Aorta (tissue), 5 donors: ENCODE measurements at regions of chr16 and their contacts with region 1.

Region 1: GRCh38 chr16:81095953-81096717 is at the start of gene GCSH:
- DNase-seq: peak; percentile 100
- ATAC-seq: peak; percentile 100
- H3K4me3 ChIP-seq: peak within 1 kb of the TSS; percentile 44 to 66
- H3K27ac ChIP-seq: peak within 1 kb of the TSS in 1 of 2 donors; percentile 78
- H3K4me1 ChIP-seq: no peaks in the 10 kb centered on the region
- H3K27me3 ChIP-seq: no peaks in the 10 kb centered on the region
- total RNA-seq, gene GCSH: 14.7 to 18.1 TPM

Region 2: GRCh38 chr16:80459331-80459777 is 636.8 kb before region 1 on chr16:
- intact Hi-C with region 1: no loop called
- DNase-seq: no peak
- ATAC-seq: peak; percentile 57
- H3K4me3 ChIP-seq: no peak overlapping the region
- H3K27ac ChIP-seq: no peak overlapping the region
- H3K4me1 ChIP-seq: no peaks in the 10 kb centered on the region
- H3K27me3 ChIP-seq: no peaks in the 10 kb centered on the region

Region 3: GRCh38 chr16:80875616-80876015 is 220.5 kb before region 1 on chr16:
- intact Hi-C with region 1: no loop called
- DNase-seq: no peak
- ATAC-seq: no peak
- H3K4me3 ChIP-seq: no peak overlapping the region
- H3K27ac ChIP-seq: no peak overlapping the region
- H3K4me1 ChIP-seq: no peaks in the 10 kb centered on the region
- H3K27me3 ChIP-seq: no peaks in the 10 kb centered on the region

Region 4: GRCh38 chr16:81006814-81007696 is 89.1 kb before region 1 on chr16 and contains the starts of genes CENPN and CMC2:
- intact Hi-C with region 1: loop called in 1 of 2 experiments (anchors 1 kb)
- DNase-seq: peak; percentile 99
- ATAC-seq: peak; percentile 99
- H3K4me3 ChIP-seq: peak within 1 kb of the TSS; percentile 50 to 78
- H3K27ac ChIP-seq: peak within 1 kb of the TSS; percentile 68 to 81
- H3K4me1 ChIP-seq: peaks cover 0 to 3% of the 10 kb centered on the region in 2 donors
- H3K27me3 ChIP-seq: no peaks in the 10 kb centered on the region
- total RNA-seq, gene CENPN: 4.4 to 5.3 TPM
- total RNA-seq, gene CMC2: 33.0 to 33.2 TPM

Region 5: GRCh38 chr16:81077076-81077940 is 18.8 kb before region 1 on chr16 and contains the start of gene C16orf46:
- intact Hi-C with region 1: loop called in 1 of 2 experiments (anchors 2 kb)
- DNase-seq: peak; percentile 98 to 100
- ATAC-seq: peak; percentile 100
- H3K4me3 ChIP-seq: peak within 1 kb of the TSS; percentile 57 to 78
- H3K27ac ChIP-seq: peak within 1 kb of the TSS; percentile 64 to 97
- H3K4me1 ChIP-seq: no peaks in the 10 kb centered on the region
- H3K27me3 ChIP-seq: no peaks in the 10 kb centered on the region
- total RNA-seq, gene C16orf46: 0.24 to 0.49 TPM

Region 6: GRCh38 chr16:81314603-81315270 is 218.6 kb after region 1 on chr16 and contains the start of gene GAN:
- intact Hi-C with region 1: loop called (anchors 10 kb)
- DNase-seq: peak; percentile 97 to 98
- ATAC-seq: peak; percentile 98
- H3K4me3 ChIP-seq: peak within 1 kb of the TSS; percentile 86 to 93
- H3K27ac ChIP-seq: peak within 1 kb of the TSS in 1 of 2 donors; percentile 88
- H3K4me1 ChIP-seq: peaks cover 0 to 3% of the 10 kb centered on the region in 2 donors
- H3K27me3 ChIP-seq: no peaks in the 10 kb centered on the region
- total RNA-seq, gene GAN: 11.5 to 11.9 TPM